CD4-positive, alpha-beta memory T cell (primary cell): ENCODE measurements at regions of chr2 and their contacts with region 1.

Region 1: DNA sequence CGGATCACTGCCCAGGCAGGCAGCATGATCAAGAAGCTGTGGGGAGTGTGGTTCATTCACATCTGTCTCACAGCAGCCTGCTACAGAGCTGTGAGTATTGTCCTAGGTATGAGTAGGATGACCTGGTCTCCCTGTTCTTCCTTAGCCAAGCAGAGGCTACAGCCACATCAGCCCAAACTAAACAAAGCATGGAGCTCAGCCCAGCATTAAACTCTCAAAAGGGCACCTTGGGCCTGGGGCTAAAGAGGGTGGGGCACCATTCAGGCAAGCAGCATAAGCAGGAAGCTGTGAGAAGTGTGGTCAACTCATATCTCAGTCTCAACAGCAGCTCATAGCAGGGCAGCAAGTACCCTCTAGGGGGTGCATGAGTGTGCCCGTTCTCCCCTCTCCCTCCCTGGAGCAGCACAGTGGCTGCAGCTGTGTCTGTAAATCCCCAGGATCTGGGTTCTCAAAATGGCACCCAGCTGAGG is 139.6 kb downstream of the TRABD2A start:
- DNase-seq: peak; percentile 47 to 58 (median 51)
- H3K4me3 ChIP-seq: no peak overlapping the region
- H3K4me3 Mint-ChIP-seq: peak overlapping the region in 4 of 8 donors; percentile 12 to 39 (median 28)
- H3K27ac ChIP-seq: no peak overlapping the region
- H3K27ac Mint-ChIP-seq: peak overlapping the region in 6 of 7 donors; percentile 17 to 87 (median 64)
- H3K4me1 ChIP-seq: peaks cover 22% of the 10 kb centered on the region
- H3K4me1 Mint-ChIP-seq: peaks cover 15 to 28% (median 21%) of the 10 kb centered on the region in 4 donors
- H3K27me3 ChIP-seq: no peaks in the 10 kb centered on the region
- H3K27me3 Mint-ChIP-seq: no peaks in the 10 kb centered on the region

Region 2: GRCh38 chr2:84495539-84496146 is 245.7 kb before region 1 on chr2:
- CTCF ChIA-PET with region 1: interaction called, 9 read pairs
- POLR2A ChIA-PET with region 1: no interaction called
- intact Hi-C with region 1: loop called (anchors 2 kb)
- DNase-seq: peak; percentile 63 to 75 (median 71)
- H3K4me3 ChIP-seq: no peak overlapping the region
- H3K4me3 Mint-ChIP-seq: no peak overlapping the region
- H3K27ac ChIP-seq: no peak overlapping the region
- H3K27ac Mint-ChIP-seq: peak overlapping the region in 6 of 7 donors; percentile 39 to 84 (median 60)
- H3K4me1 ChIP-seq: peaks cover 8% of the 10 kb centered on the region
- H3K4me1 Mint-ChIP-seq: peaks cover 6 to 14% (median 7%) of the 10 kb centered on the region in 4 donors
- H3K27me3 ChIP-seq: no peaks in the 10 kb centered on the region
- H3K27me3 Mint-ChIP-seq: no peaks in the 10 kb centered on the region

Region 3: GRCh38 chr2:84832772-84833461 is 91.6 kb after region 1 on chr2:
- CTCF ChIA-PET with region 1: interaction called, 11 read pairs
- POLR2A ChIA-PET with region 1: interaction called, 4 read pairs
- intact Hi-C with region 1: no loop called
- DNase-seq: peak in 2 of 5 donors; percentile 15 to 38
- H3K4me3 ChIP-seq: peak overlapping the region in 1 of 2 donors; percentile 39
- H3K4me3 Mint-ChIP-seq: peak overlapping the region; percentile 52 to 84 (median 78)
- H3K27ac ChIP-seq: peak overlapping the region; percentile 59
- H3K27ac Mint-ChIP-seq: peak overlapping the region in 4 of 7 donors; percentile 93 to 96 (median 94)
- H3K4me1 ChIP-seq: peaks cover 87% of the 10 kb centered on the region
- H3K4me1 Mint-ChIP-seq: peaks cover 27 to 49% (median 39%) of the 10 kb centered on the region in 4 donors
- H3K27me3 ChIP-seq: no peaks in the 10 kb centered on the region
- H3K27me3 Mint-ChIP-seq: no peaks in the 10 kb centered on the region

Region 4: GRCh38 chr2:84840306-84840705 is 99.0 kb after region 1 on chr2:
- CTCF ChIA-PET with region 1: interaction called, 26 read pairs
- POLR2A ChIA-PET with region 1: interaction called, 13 read pairs
- intact Hi-C with region 1: no loop called
- DNase-seq: peak in 1 of 5 donors; percentile 10
- H3K4me3 ChIP-seq: peak overlapping the region in 1 of 2 donors; percentile 39
- H3K4me3 Mint-ChIP-seq: peak overlapping the region; percentile 63 to 87 (median 80)
- H3K27ac ChIP-seq: peak overlapping the region; percentile 61
- H3K27ac Mint-ChIP-seq: peak overlapping the region; percentile 92 to 98 (median 96)
- H3K4me1 ChIP-seq: peaks cover 88% of the 10 kb centered on the region
- H3K4me1 Mint-ChIP-seq: peaks cover 74 to 91% (median 84%) of the 10 kb centered on the region in 4 donors
- H3K27me3 ChIP-seq: no peaks in the 10 kb centered on the region
- H3K27me3 Mint-ChIP-seq: no peaks in the 10 kb centered on the region

Region 5: GRCh38 chr2:84846041-84846663 is 104.8 kb after region 1 on chr2:
- CTCF ChIA-PET with region 1: interaction called, 26 read pairs
- POLR2A ChIA-PET with region 1: interaction called, 17 read pairs
- intact Hi-C with region 1: no loop called
- DNase-seq: peak; percentile 67 to 84 (median 78)
- H3K4me3 ChIP-seq: peak overlapping the region; percentile 11 to 15
- H3K4me3 Mint-ChIP-seq: peak overlapping the region; percentile 31 to 84 (median 74)
- H3K27ac ChIP-seq: peak overlapping the region; percentile 61
- H3K27ac Mint-ChIP-seq: peak overlapping the region; percentile 92 to 99 (median 97)
- H3K4me1 ChIP-seq: peaks cover 99% of the 10 kb centered on the region
- H3K4me1 Mint-ChIP-seq: peaks cover 81 to 98% (median 90%) of the 10 kb centered on the region in 4 donors
- H3K27me3 ChIP-seq: no peaks in the 10 kb centered on the region
- H3K27me3 Mint-ChIP-seq: no peaks in the 10 kb centered on the region

Region 6: DNA sequence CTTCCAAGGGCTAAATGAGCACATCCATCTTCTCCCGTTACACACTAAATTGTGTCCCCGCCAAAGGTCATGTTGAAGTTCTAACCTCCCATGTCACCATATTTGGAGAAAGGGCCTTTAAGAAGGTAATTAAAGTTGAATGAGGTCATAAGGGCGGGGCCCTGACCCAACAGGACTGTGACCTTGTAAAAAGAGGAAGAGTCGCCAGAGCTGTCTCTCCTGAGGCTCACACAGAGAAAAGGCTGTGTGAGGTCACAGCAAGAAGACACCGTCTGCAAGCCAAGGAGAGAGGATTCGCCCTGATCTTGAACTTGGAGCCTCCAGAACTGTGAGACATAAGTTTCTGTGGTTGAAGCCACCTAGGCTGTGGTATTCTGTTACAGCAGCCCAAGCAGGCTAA is 115.5 kb after region 1 on chr2:
- CTCF ChIA-PET with region 1: interaction called, 70 read pairs
- POLR2A ChIA-PET with region 1: interaction called, 11 read pairs
- intact Hi-C with region 1: loop called (anchors 2 kb)
- DNase-seq: peak in 3 of 5 donors; percentile 29 to 51 (median 30)
- H3K4me3 ChIP-seq: peak overlapping the region in 1 of 2 donors; percentile 23
- H3K4me3 Mint-ChIP-seq: peak overlapping the region; percentile 40 to 89 (median 77)
- H3K27ac ChIP-seq: peak overlapping the region; percentile 53
- H3K27ac Mint-ChIP-seq: peak overlapping the region; percentile 83 to 97 (median 96)
- H3K4me1 ChIP-seq: peaks cover 98% of the 10 kb centered on the region
- H3K4me1 Mint-ChIP-seq: peaks cover 84 to 97% (median 91%) of the 10 kb centered on the region in 4 donors
- H3K27me3 ChIP-seq: no peaks in the 10 kb centered on the region
- H3K27me3 Mint-ChIP-seq: no peaks in the 10 kb centered on the region